ENCODE measurements at regions of chr7 and their contacts with region 1.

Region 1: DNA sequence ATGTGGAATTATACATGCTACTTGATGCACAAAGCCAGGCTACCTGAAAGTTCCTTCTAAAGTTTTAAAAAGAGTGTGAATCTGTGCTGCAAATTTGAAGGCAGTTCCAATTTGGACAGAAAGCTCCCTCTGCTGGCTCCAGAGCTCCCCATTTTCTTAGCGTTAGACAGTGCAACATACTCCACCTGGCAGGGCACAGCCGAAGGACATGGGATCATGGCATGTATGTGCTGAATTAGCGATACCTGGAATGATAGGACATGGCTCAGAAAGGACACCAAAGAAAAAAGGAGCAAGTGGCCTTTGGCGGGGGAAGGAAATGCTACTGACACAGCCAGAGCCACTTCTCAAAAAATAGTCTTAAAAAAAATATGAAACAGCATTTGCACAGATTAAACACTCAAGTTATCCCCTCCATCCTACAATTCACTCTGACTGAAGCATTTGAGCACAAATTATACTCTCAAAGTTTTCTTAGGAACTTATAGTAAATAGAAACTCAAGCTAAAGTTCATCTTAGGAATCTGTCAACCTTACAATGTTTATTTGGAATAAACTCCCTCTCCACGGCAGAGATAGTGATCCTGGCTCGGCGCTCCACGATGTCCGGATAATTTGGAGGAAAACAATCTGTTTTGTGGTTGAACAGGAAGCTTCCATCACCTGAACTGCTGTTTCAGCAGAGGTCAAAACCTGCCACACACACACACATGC is 80.0 kb downstream of the C7orf25 start:
- DNase-seq: no peak
- ATAC-seq: peak; percentile 86
- H3K4me3 ChIP-seq: no peak overlapping the region
- H3K27ac ChIP-seq: no peak overlapping the region
- H3K4me1 ChIP-seq: no peaks in the 10 kb centered on the region
- H3K27me3 ChIP-seq: peaks cover 4% of the 10 kb centered on the region
- CTCF ChIP-seq: peak; percentile 80

Region 2: GRCh38 chr7:42272793-42273665 is 558.8 kb before region 1 on chr7:
- CTCF ChIA-PET with region 1: no interaction called
- POLR2A ChIA-PET with region 1: no interaction called
- in situ Hi-C with region 1: no loop called
- intact Hi-C with region 1: loop called (anchors 10 kb)
- DNase-seq: no peak
- ATAC-seq: no peak; the same call in 1 of the 2 replicates
- H3K4me3 ChIP-seq: no peak overlapping the region
- H3K27ac ChIP-seq: no peak overlapping the region
- H3K4me1 ChIP-seq: no peaks in the 10 kb centered on the region
- H3K27me3 ChIP-seq: no peaks in the 10 kb centered on the region
- CTCF ChIP-seq: peak; percentile 9; the same call in 1 of the 2 replicates